ENCODE measurements at regions of chr4 and their contacts with region 1.

Region 1: GRCh38 chr4:165765053-165765452 is 108.0 kb upstream of the TLL1 start:
- DNase-seq: no peak
- ATAC-seq: no peak
- H3K4me3 ChIP-seq: no peak overlapping the region
- H3K27ac ChIP-seq: peak overlapping the region in 1 of 10 donors; percentile 44
- H3K4me1 ChIP-seq: peaks cover 0 to 29% (median 4%) of the 10 kb centered on the region in 9 donors
- H3K27me3 ChIP-seq: no peaks in the 10 kb centered on the region
- CTCF ChIP-seq: no peak

Region 2: GRCh38 chr4:165838575-165838974 is 73.5 kb after region 1 on chr4:
- intact Hi-C with region 1: loop called in 1 of 10 experiments (anchors 5 kb)
- DNase-seq: peak in 1 of 2 donors; percentile 5
- ATAC-seq: peak; percentile 47 to 91 (median 76)
- H3K4me3 ChIP-seq: no peak overlapping the region
- H3K27ac ChIP-seq: peak overlapping the region in 5 of 10 donors; percentile 4 to 76 (median 46)
- H3K4me1 ChIP-seq: peaks cover 0 to 22% (median 0%) of the 10 kb centered on the region in 9 donors
- H3K27me3 ChIP-seq: no peaks in the 10 kb centered on the region
- CTCF ChIP-seq: no peak

Measured in heart right ventricle (tissue), 16 donors.